B cell (primary cell): ENCODE measurements at regions of chr1 and their contacts with region 1.

Region 1: GRCh38 chr1:210328746-210329503 is at the start of gene HHAT:
- DNase-seq: peak; percentile 75
- ATAC-seq: peak; percentile 70
- H3K4me3 ChIP-seq: peak within 1 kb of the TSS; percentile 52 to 89 (median 87)
- H3K4me3 Mint-ChIP-seq: peak within 1 kb of the TSS; percentile 94
- H3K27ac ChIP-seq: peak within 1 kb of the TSS; percentile 54 to 64
- H3K27ac Mint-ChIP-seq: peak within 1 kb of the TSS; percentile 90
- H3K4me1 ChIP-seq: peaks cover 16 to 25% of the 10 kb centered on the region in 2 donors
- H3K4me1 Mint-ChIP-seq: peaks cover 39% of the 10 kb centered on the region
- H3K27me3 ChIP-seq: peaks cover 0 to 2% (median 0%) of the 10 kb centered on the region in 4 experiments
- H3K27me3 Mint-ChIP-seq: peaks cover 12% of the 10 kb centered on the region
- CTCF ChIP-seq: no peak
- total RNA-seq, gene HHAT: 26.7 and 28.2 TPM in 2 replicates

Region 2: GRCh38 chr1:210360852-210361477 is 32.0 kb after region 1 on chr1:
- CTCF ChIA-PET with region 1: interaction called, 20 read pairs
- POLR2A ChIA-PET with region 1: no interaction called
- intact Hi-C with region 1: loop called (anchors 2 kb)
- DNase-seq: peak; percentile 23
- ATAC-seq: peak; percentile 43
- H3K4me3 ChIP-seq: no peak overlapping the region
- H3K4me3 Mint-ChIP-seq: no peak overlapping the region
- H3K27ac ChIP-seq: no peak overlapping the region
- H3K27ac Mint-ChIP-seq: no peak overlapping the region
- H3K4me1 ChIP-seq: no peaks in the 10 kb centered on the region
- H3K4me1 Mint-ChIP-seq: no peaks in the 10 kb centered on the region
- H3K27me3 ChIP-seq: no peaks in the 10 kb centered on the region
- H3K27me3 Mint-ChIP-seq: no peaks in the 10 kb centered on the region
- CTCF ChIP-seq: no peak

Region 3: DNA sequence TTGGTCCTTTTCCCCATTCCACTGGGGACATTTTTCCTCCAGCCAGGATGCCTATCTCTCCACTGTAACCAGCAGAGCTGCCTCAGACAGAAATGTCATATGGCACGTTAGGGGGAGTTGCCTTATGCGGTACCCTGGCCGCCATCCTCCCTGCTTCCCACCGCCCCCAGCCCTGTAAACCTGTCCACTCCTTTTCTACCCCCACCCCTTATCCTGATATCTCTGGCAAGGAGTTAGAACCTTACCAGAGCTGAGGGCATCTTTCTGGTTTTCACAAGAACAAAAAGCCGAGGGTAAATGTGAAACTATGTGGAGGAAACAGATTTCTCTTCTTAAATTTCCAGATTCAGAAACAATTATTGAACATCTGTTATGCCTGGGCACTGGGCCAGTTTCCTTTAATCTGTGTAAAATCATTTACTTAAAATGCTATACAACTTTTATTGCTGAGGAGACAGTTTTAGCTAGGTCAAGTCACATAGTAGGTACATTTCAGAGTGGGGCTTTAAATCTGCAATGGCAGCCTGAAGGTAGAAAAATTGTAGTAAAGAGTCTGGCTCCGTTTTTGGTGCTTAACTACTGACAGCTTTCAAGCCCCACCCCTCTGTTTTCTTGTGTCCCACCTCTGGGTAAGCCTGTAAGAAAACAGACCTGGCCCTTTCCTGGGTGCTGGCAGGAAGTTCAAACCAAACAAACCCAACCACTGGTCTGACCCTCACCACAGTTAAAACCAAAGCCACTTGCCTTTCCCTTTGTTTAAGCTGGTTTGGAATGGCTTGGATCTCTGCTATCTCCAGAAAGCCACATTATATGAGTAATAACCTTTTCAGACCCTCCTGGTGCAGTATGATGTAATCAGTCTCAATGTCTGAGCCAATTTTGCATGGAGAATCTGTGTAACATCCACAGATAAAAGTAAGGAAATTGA is 318.7 kb after region 1 on chr1:
- CTCF ChIA-PET with region 1: no interaction called
- POLR2A ChIA-PET with region 1: no interaction called
- intact Hi-C with region 1: no loop called
- DNase-seq: no peak
- ATAC-seq: no peak
- H3K4me3 ChIP-seq: no peak overlapping the region
- H3K4me3 Mint-ChIP-seq: no peak overlapping the region
- H3K27ac ChIP-seq: no peak overlapping the region
- H3K27ac Mint-ChIP-seq: no peak overlapping the region
- H3K4me1 ChIP-seq: no peaks in the 10 kb centered on the region
- H3K4me1 Mint-ChIP-seq: no peaks in the 10 kb centered on the region
- H3K27me3 ChIP-seq: no peaks in the 10 kb centered on the region
- H3K27me3 Mint-ChIP-seq: no peaks in the 10 kb centered on the region
- CTCF ChIP-seq: no peak